ENCODE measurements at regions of chr12 and their contacts with region 1.

Region 1: DNA sequence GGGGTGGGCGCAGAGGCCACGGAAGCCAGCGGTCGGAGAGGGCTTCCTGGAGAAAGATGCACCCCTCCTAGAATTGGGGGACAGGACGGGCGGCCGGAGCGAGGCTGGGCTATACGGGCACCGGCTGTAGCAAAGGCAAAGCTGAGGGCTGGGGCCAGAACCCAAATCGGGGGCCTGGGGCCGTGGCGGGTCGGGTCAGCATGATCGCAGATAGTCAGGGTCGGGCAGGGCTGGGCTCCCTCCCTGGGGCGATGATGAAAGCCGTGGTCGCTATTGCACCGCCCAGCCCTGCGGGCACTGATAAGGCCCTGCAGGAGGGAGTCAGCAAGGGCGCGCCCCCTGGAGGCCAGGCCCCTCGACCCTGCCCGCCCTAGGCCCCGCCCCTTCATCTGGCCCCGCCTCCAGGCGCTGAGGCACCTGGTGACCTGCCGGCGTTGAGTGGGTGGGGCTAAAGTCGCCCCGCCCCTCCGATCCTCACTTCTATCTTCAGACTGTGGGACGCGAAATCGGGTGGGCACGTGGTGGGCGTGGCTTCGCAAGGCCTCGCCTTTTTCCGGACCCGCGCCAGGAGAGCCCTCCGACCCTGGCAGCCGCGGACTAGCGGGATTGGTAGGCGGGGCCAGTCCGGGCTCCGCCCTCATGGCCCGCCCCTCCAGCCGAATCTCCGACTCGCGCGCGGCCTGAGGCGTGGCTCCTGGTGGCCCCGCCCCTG is 418 bp upstream of the SH2B3 start:
- DNase-seq: peak; percentile 100
- ATAC-seq: peak; percentile 77
- H3K4me3 Mint-ChIP-seq: peak overlapping the region; percentile 76
- H3K27ac Mint-ChIP-seq: peak overlapping the region; percentile 96
- H3K4me1 Mint-ChIP-seq: peaks cover 51% of the 10 kb centered on the region
- H3K27me3 Mint-ChIP-seq: no peaks in the 10 kb centered on the region

Region 2: GRCh38 chr12:110776410-110776809 is 628.9 kb before region 1 on chr12:
- CTCF ChIA-PET with region 1: no interaction called
- POLR2A ChIA-PET with region 1: no interaction called
- intact Hi-C with region 1: loop called in 1 of 2 experiments (anchors 2 kb)
- DNase-seq: peak; percentile 81
- ATAC-seq: peak; percentile 84
- H3K4me3 Mint-ChIP-seq: peak overlapping the region; percentile 9
- H3K27ac Mint-ChIP-seq: peak overlapping the region; percentile 98
- H3K4me1 Mint-ChIP-seq: peaks cover 74% of the 10 kb centered on the region
- H3K27me3 Mint-ChIP-seq: no peaks in the 10 kb centered on the region

Region 3: DNA sequence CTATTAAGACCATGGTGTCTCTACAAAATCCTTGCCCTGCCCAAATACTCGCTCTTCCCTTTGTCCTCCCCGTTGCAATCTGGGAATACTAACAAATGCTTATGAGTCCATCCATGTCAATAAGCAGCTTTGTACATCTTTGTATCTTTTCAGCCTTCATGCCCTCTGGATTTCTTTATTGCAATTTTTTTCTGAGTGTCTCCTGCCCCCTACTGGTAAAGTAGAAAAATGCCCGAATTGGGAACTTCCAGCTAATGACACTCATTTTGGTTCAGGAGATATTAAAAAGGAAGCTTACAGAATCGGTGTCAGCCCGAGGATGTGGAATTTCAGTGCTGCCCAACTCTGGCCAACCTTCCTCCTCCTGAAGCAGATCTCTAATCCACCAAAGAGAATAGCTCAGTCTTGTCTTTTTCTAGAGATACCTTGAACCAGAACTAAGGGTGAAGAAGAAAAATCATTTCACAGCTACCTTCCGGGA is 46.4 kb after region 1 on chr12:
- CTCF ChIA-PET with region 1: interaction called, 890 read pairs
- POLR2A ChIA-PET with region 1: interaction called, 4 read pairs
- intact Hi-C with region 1: no loop called
- DNase-seq: no peak
- ATAC-seq: peak; percentile 40
- H3K4me3 Mint-ChIP-seq: no peak overlapping the region
- H3K27ac Mint-ChIP-seq: no peak overlapping the region
- H3K4me1 Mint-ChIP-seq: peaks cover 16% of the 10 kb centered on the region
- H3K27me3 Mint-ChIP-seq: no peaks in the 10 kb centered on the region

Region 4: DNA sequence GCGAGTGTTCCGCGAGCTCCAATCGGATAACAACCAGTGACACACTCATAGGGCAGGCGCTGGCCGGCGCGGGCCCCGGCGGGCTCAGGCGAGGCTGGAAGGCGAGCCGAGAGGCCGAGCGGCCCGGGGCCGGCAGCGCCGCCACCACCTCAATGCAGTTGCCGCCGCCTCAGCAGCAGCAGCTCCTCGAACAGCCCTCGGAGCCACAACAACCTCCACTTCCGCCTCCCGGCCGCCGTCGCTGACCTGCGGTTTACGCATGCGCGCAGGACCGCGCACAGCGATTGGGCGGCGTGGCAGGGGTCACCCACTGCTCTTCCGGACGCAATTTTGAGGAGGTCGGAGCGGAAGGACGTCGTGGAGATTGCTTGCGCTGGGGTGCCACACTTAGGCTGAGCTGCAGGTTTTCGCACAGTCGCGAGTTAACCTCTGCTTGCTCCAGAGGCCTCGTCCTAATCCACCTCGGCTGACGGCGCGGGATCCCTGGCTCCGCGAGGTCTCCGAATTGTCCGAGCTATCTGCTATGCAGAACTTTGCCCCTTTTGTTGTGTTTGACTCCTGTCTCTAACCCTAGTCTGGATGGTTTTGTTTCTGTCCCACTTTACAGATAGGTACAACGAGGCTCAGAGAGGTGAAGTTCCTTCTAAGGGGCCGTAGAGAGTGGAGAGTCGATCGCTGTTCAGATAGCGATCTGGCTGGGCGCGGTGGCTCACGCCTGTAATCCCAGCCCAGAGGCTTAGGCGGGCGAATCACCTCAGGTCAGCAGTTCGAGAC is 280.6 kb after region 1 on chr12 and contains the starts of genes ACAD10 and BRAP:
- CTCF ChIA-PET with region 1: no interaction called
- POLR2A ChIA-PET with region 1: interaction called, 5 read pairs
- intact Hi-C with region 1: loop called in 1 of 2 experiments (anchors 2 kb)
- DNase-seq: peak; percentile 95
- ATAC-seq: peak; percentile 97
- H3K4me3 Mint-ChIP-seq: peak within 1 kb of the TSS; percentile 89
- H3K27ac Mint-ChIP-seq: peak within 1 kb of the TSS; percentile 91
- H3K4me1 Mint-ChIP-seq: peaks cover 31% of the 10 kb centered on the region
- H3K27me3 Mint-ChIP-seq: no peaks in the 10 kb centered on the region
- total RNA-seq, gene ACAD10: 25.5 to 27.5 TPM
- total RNA-seq, gene BRAP: 18.3 to 23.6 TPM

Region 5: GRCh38 chr12:112012775-112013600 is 607.7 kb after region 1 on chr12 and contains the starts of genes ERP29 and TMEM116:
- CTCF ChIA-PET with region 1: no interaction called
- POLR2A ChIA-PET with region 1: no interaction called
- intact Hi-C with region 1: loop called in 1 of 2 experiments (anchors 1 kb)
- DNase-seq: peak; percentile 100
- ATAC-seq: peak; percentile 80
- H3K4me3 Mint-ChIP-seq: peak within 1 kb of the TSS; percentile 98
- H3K27ac Mint-ChIP-seq: peak within 1 kb of the TSS; percentile 99
- H3K4me1 Mint-ChIP-seq: peaks cover 53% of the 10 kb centered on the region
- H3K27me3 Mint-ChIP-seq: no peaks in the 10 kb centered on the region
- total RNA-seq, gene ERP29: 79.7 to 87.3 TPM
- total RNA-seq, gene TMEM116: 11.2 to 12.5 TPM